Thyroid gland (tissue), 4 donors: ENCODE measurements at regions of chr6 and their contacts with region 1.

Region 1: GRCh38 chr6:31581434-31582229 is 592 bp downstream of the LTB start:
- DNase-seq: peak in 1 of 2 donors; percentile 22
- H3K4me3 ChIP-seq: peak overlapping the region; percentile 58 to 91 (median 73)
- H3K27ac ChIP-seq: peak overlapping the region in 2 of 3 donors; percentile 10 to 83
- H3K4me1 ChIP-seq: peaks cover 10 to 12% of the 10 kb centered on the region in 2 donors
- H3K27me3 ChIP-seq: no peaks in the 10 kb centered on the region
- CTCF ChIP-seq: no peak
- POLR2A ChIP-seq: no peak

Region 2: GRCh38 chr6:31493875-31494694 is 87.5 kb before region 1 on chr6:
- intact Hi-C with region 1: no loop called
- DNase-seq: peak; percentile 78 to 79
- H3K4me3 ChIP-seq: peak overlapping the region in 2 of 3 donors; percentile 35 to 49
- H3K27ac ChIP-seq: peak overlapping the region in 2 of 3 donors; percentile 57 to 73
- H3K4me1 ChIP-seq: peaks cover 0 to 7% of the 10 kb centered on the region in 2 donors
- H3K27me3 ChIP-seq: no peaks in the 10 kb centered on the region
- CTCF ChIP-seq: peak; percentile 36 to 78 (median 66)
- POLR2A ChIP-seq: no peak

Region 3: GRCh38 chr6:31559958-31560696 is 21.5 kb before region 1 on chr6:
- intact Hi-C with region 1: loop called (anchors 2 kb)
- DNase-seq: peak; percentile 35 to 38
- H3K4me3 ChIP-seq: no peak overlapping the region
- H3K27ac ChIP-seq: peak overlapping the region in 2 of 3 donors; percentile 22 to 47
- H3K4me1 ChIP-seq: peaks cover 0 to 28% of the 10 kb centered on the region in 2 donors
- H3K27me3 ChIP-seq: no peaks in the 10 kb centered on the region
- CTCF ChIP-seq: no peak
- POLR2A ChIP-seq: no peak